ENCODE measurements at regions of chr21 and their contacts with region 1.

Region 1: GRCh38 chr21:36927719-36928117 is 38.8 kb downstream of the HLCS start:
- DNase-seq: peak; percentile 43 to 86
- ATAC-seq: peak; percentile 96 to 97
- H3K4me3 ChIP-seq: no peak overlapping the region
- H3K27ac ChIP-seq: peak overlapping the region; percentile 64 to 81; a peak in 5 of 6 replicates
- H3K4me1 ChIP-seq: peaks cover 31% of the 10 kb centered on the region
- CTCF ChIP-seq: peak; percentile 79
- EP300 ChIP-seq: no peak
- POLR2A ChIP-seq: no peak
- RAD21 ChIP-seq: peak; percentile 86 to 92

Region 2: GRCh38 chr21:36419996-36420395 is 507.7 kb before region 1 on chr21:
- CTCF ChIA-PET with region 1: interaction called, 12 read pairs
- POLR2A ChIA-PET with region 1: no interaction called
- DNase-seq: peak; percentile 84 to 91
- ATAC-seq: peak; percentile 92 to 95
- H3K4me3 ChIP-seq: no peak overlapping the region
- H3K27ac ChIP-seq: peak overlapping the region; percentile 47 to 67; a peak in 4 of 6 replicates
- H3K4me1 ChIP-seq: peaks cover 13% of the 10 kb centered on the region
- CTCF ChIP-seq: peak; percentile 67
- EP300 ChIP-seq: no peak
- POLR2A ChIP-seq: no peak
- RAD21 ChIP-seq: peak; percentile 77 to 82

Region 3: DNA sequence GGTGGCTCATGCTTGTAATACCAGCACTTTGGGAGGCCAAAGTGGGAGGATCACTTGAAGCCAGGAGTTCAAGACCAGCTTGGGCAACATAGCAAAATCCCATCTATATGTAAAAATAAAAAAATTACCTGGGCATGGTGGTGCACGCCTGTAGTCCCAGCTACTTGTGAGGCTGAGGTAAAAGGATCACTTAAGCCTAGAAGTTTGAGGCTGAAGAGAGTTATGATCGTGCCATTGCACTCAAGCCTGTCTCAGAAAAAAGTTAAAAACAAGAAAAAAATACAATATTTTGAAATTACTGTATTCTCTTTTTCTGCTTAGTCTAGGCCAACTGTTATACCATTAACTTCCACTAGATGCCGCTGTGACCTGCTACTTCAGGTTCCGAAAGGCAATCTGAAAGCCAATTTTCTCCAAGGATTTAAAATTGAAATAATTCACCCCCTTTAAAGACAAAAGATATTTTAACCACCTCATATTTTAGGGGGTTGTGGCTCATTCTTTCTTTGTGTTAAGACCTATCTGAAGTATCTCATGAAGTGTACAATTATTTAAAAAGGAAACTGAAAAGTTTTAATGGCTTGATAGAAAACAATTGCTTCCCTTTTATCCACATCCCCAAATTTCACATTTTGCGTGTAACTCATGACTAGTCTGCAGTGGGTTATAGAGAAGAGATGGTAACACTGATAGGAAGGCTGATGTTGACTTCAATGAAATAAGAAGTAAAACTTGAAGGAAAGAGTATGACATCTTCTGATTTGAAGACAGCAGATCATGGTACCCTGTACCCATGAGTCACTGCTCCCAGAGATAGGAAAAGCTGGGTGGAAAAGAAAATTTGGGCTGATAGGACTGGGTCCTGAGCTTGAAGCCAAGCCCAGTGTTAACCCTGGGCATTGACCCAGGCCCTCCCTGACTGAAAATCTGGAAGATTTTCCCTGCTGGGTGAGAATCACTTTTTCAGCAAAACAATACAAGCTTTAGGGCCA is 423.4 kb before region 1 on chr21:
- CTCF ChIA-PET with region 1: interaction called, 14 read pairs
- POLR2A ChIA-PET with region 1: no interaction called
- DNase-seq: peak; percentile 5 to 44
- ATAC-seq: no peak
- H3K4me3 ChIP-seq: no peak overlapping the region
- H3K27ac ChIP-seq: peak overlapping the region; percentile 23 to 59; a peak in 4 of 6 replicates
- H3K4me1 ChIP-seq: peaks cover 16% of the 10 kb centered on the region; the same call in 2 of the 3 replicates
- CTCF ChIP-seq: peak; percentile 76
- EP300 ChIP-seq: no peak
- POLR2A ChIP-seq: no peak
- RAD21 ChIP-seq: peak; percentile 76 to 82

Region 4: GRCh38 chr21:36630485-36631206 is 297.1 kb before region 1 on chr21:
- CTCF ChIA-PET with region 1: interaction called, 20 read pairs
- POLR2A ChIA-PET with region 1: no interaction called
- DNase-seq: peak; percentile 57 to 60
- ATAC-seq: peak; percentile 73 to 88; a peak in 5 of 6 replicates
- H3K4me3 ChIP-seq: no peak overlapping the region
- H3K27ac ChIP-seq: peak overlapping the region in 1 of 2 experiments; percentile 16; a peak in 1 of 6 replicates
- H3K4me1 ChIP-seq: no peaks in the 10 kb centered on the region
- CTCF ChIP-seq: peak; percentile 62
- EP300 ChIP-seq: no peak
- POLR2A ChIP-seq: no peak
- RAD21 ChIP-seq: peak; percentile 57 to 63

Region 5: DNA sequence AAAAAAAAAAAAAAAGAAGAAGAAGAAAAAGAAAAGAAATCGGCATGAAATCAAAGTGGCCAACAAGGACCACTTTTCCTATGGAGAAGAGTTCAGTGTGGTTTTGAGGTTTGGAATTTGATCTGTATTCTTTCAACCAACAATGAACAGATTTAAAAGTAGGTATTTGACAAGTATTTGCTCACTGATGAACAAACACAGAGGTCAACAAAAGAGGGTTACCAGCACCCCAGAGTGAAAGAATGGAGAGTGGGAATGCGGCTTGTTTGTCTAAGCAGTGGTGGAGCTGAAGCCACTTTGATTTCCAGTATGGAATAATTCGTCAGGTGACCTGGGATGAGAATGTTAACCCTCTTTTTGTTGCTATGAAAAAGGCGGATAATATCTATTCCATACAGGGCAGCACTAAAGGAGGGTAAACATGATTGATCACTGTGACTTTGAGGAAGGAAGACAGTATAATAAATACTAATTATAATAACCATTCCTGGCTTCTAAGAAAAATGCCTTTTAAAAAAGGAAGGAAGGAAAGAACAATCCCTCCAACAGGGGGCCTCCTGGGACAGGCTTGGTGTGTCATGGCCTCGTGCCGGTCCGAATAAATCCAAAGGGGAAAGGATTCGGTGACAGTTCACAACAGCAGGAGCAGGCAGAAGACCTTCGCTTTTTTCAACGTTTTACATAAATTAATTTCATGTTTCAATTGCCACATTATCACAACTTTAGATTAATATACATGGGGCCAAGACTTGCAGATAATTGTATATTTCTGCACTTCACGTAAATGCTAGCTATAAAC is 266.0 kb before region 1 on chr21:
- CTCF ChIA-PET with region 1: interaction called, 16 read pairs
- POLR2A ChIA-PET with region 1: interaction called, 3 read pairs
- DNase-seq: peak; percentile 19 to 54
- ATAC-seq: peak in 1 of 2 experiments; percentile 78; a peak in 3 of 6 replicates
- H3K4me3 ChIP-seq: no peak overlapping the region
- H3K27ac ChIP-seq: peak overlapping the region; percentile 16 to 70; a peak in 3 of 6 replicates
- H3K4me1 ChIP-seq: peaks cover 14% of the 10 kb centered on the region; the same call in 1 of the 3 replicates
- CTCF ChIP-seq: peak; percentile 47
- EP300 ChIP-seq: no peak
- POLR2A ChIP-seq: no peak
- RAD21 ChIP-seq: peak; percentile 63 to 74

Region 6: DNA sequence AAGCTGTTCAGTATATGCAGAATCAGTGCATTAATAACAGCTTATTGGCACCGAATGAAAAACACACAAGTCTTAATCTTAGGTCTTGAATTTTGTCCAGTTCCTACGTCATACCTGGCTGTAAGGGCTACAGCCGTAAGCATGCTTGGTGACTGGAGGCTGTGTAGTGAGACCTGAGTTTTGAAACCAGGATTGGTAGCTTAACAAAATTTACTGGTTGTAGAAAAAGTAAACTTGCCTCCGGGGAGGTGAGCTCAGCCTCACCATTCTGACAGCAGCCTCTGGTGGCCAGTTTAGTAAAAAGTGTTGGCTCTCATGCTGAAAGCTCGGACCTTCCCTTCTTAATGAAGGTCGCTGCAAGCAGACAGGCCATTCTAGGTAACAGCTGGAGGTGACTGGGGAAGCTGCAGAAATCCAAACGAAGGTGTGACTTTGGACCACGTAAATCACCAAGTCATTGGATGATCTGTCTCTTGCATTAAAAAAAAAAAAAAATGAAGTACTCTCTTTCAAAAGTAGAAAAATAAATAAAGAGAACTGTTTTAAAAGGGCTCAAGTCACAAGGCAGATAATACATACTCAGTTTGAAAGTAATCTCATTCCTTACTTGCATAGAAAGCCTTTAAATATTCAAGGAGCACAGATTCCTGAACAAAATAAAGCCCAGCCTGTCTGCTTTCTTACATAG is 10.1 kb before region 1 on chr21:
- CTCF ChIA-PET with region 1: interaction called, 22 read pairs
- POLR2A ChIA-PET with region 1: no interaction called
- DNase-seq: peak; percentile 43 to 84
- ATAC-seq: peak; percentile 92 to 97
- H3K4me3 ChIP-seq: no peak overlapping the region
- H3K27ac ChIP-seq: peak overlapping the region; percentile 74 to 95
- H3K4me1 ChIP-seq: peaks cover 43% of the 10 kb centered on the region
- CTCF ChIP-seq: peak; percentile 67
- EP300 ChIP-seq: no peak
- POLR2A ChIP-seq: no peak
- RAD21 ChIP-seq: peak; percentile 78 to 79